H1 (cell line): ENCODE measurements at regions of chr3 and their contacts with region 1.

Region 1: GRCh38 chr3:15405448-15406050 is 21.8 kb downstream of the METTL6 start:
- DNase-seq: no peak
- H3K4me3 ChIP-seq: no peak overlapping the region
- H3K27ac ChIP-seq: no peak overlapping the region
- H3K4me1 ChIP-seq: no peaks in the 10 kb centered on the region
- H3K27me3 ChIP-seq: no peaks in the 10 kb centered on the region
- CTCF ChIP-seq: peak in 2 of 3 experiments; percentile 58 to 59; a peak in 3 of 4 replicates
- EP300 ChIP-seq: no peak
- POLR2A ChIP-seq: no peak
- RAD21 ChIP-seq: peak; percentile 69 to 71

Region 2: DNA sequence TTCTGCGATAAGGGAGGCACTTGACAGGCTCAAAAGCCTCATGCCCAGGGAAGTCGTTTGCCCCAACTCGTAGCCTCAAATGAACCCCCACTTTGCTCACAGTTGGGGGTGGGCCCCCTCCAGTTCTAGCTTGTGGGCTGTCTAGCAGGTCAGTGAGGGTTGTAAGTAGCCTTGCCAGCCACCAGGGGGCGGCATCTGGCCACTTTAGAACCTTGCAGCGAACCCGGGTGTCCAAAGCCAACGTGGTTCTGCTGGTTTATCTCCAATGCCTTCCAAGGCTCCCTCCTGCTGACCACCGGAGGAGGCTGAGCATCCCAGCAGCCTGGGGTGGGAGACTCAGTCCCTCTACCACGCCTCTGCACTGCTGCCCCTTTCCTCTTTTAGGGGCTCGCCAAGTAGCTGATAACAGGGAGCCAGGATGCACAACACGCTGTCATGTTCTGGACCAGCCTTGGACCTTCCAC is 297.4 kb before region 1 on chr3:
- CTCF ChIA-PET with region 1: interaction called, 25 read pairs
- POLR2A ChIA-PET with region 1: no interaction called
- DNase-seq: peak; percentile 68 to 91
- H3K4me3 ChIP-seq: no peak overlapping the region
- H3K27ac ChIP-seq: no peak overlapping the region
- H3K4me1 ChIP-seq: no peaks in the 10 kb centered on the region; a peak in 1 of 7 replicates
- H3K27me3 ChIP-seq: no peaks in the 10 kb centered on the region
- CTCF ChIP-seq: peak; percentile 88 to 93 (median 89)
- EP300 ChIP-seq: no peak
- POLR2A ChIP-seq: no peak
- RAD21 ChIP-seq: peak; percentile 92 to 95

Region 3: GRCh38 chr3:15199493-15200105 is 205.9 kb before region 1 on chr3:
- CTCF ChIA-PET with region 1: interaction called, 22 read pairs
- POLR2A ChIA-PET with region 1: no interaction called
- DNase-seq: no peak
- H3K4me3 ChIP-seq: no peak overlapping the region
- H3K27ac ChIP-seq: no peak overlapping the region
- H3K4me1 ChIP-seq: peaks cover 0 to 3% (median 0%) of the 10 kb centered on the region in 4 experiments; a peak in 2 of 7 replicates
- H3K27me3 ChIP-seq: no peaks in the 10 kb centered on the region; a peak in 2 of 7 replicates
- CTCF ChIP-seq: no peak
- EP300 ChIP-seq: no peak
- POLR2A ChIP-seq: no peak
- RAD21 ChIP-seq: no peak

Region 4: DNA sequence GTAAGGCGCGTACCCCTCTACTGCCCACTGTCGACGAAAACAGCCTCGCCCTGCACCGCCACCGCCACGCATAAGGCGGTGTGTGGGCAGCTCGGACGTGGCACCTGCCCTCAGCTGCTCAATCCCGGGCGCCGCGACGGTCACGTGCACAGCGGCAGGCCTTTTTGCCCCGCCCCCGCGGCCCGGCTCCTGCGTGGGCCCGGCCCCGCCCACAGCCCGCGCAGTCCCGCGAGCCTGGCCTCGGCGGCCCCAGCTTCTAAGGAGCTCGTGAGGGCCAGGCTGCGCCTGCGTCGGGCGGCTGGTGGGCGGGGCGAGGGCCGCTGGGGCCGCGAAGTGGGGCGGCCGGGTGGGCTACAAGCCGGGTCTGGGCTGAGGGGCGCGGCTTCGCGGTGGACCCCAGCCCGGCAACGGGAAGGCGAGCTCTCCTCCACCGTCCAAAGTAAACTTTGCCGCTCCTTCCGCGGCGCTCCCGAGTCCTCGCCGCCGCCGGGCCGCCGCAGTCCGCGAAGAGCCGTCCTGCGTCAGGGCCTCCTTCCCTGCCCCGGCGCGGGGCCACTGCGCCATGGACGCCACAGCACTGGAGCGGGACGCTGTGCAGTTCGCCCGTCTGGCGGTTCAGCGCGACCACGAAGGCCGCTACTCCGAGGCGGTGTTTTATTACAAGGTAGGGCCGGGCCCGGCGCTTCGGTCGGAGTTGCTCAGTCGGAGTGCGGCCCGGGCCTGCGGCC is 199.5 kb before region 1 on chr3 and contains the start of gene CAPN7:
- CTCF ChIA-PET with region 1: interaction called, 22 read pairs
- POLR2A ChIA-PET with region 1: no interaction called
- DNase-seq: peak; percentile 23 to 86
- H3K4me3 ChIP-seq: peak within 1 kb of the TSS; percentile 83 to 92 (median 86)
- H3K27ac ChIP-seq: peak within 1 kb of the TSS; percentile 73; the same call in 1 of the 2 replicates
- H3K4me1 ChIP-seq: peaks cover 0 to 3% (median 1%) of the 10 kb centered on the region in 4 experiments; a peak in 3 of 7 replicates
- H3K27me3 ChIP-seq: no peaks in the 10 kb centered on the region; a peak in 2 of 7 replicates
- CTCF ChIP-seq: peak; percentile 31 to 69 (median 57)
- EP300 ChIP-seq: no peak
- POLR2A ChIP-seq: peak in 1 of 2 experiments; percentile 67; a peak in 2 of 3 replicates
- RAD21 ChIP-seq: peak; percentile 14 to 30; a peak in 1 of 4 replicates
- total RNA-seq, gene CAPN7: 13.0 and 13.2 TPM in 2 replicates

Region 5: GRCh38 chr3:15276028-15276724 is 129.4 kb before region 1 on chr3:
- CTCF ChIA-PET with region 1: interaction called, 227 read pairs
- POLR2A ChIA-PET with region 1: no interaction called
- DNase-seq: no peak
- H3K4me3 ChIP-seq: no peak overlapping the region
- H3K27ac ChIP-seq: no peak overlapping the region
- H3K4me1 ChIP-seq: peaks cover 0 to 12% (median 4%) of the 10 kb centered on the region in 4 experiments; a peak in 4 of 7 replicates
- H3K27me3 ChIP-seq: no peaks in the 10 kb centered on the region
- CTCF ChIP-seq: no peak
- EP300 ChIP-seq: no peak
- POLR2A ChIP-seq: no peak
- RAD21 ChIP-seq: no peak

Region 6: GRCh38 chr3:15332405-15333098 is 73.0 kb before region 1 on chr3 and contains the start of gene SH3BP5:
- CTCF ChIA-PET with region 1: interaction called, 12 read pairs
- POLR2A ChIA-PET with region 1: interaction called, 4 read pairs
- DNase-seq: peak in 1 of 2 experiments; percentile 87
- H3K4me3 ChIP-seq: peak within 1 kb of the TSS; percentile 65 to 92 (median 84)
- H3K27ac ChIP-seq: no peak within 1 kb of the TSS; the same call in 1 of the 2 replicates
- H3K4me1 ChIP-seq: peaks cover 0 to 11% (median 9%) of the 10 kb centered on the region in 4 experiments; a peak in 6 of 7 replicates
- H3K27me3 ChIP-seq: peaks cover 1 to 20% (median 10%) of the 10 kb centered on the region in 4 experiments; a peak in 6 of 7 replicates
- CTCF ChIP-seq: peak; percentile 57 to 72 (median 63)
- EP300 ChIP-seq: no peak
- POLR2A ChIP-seq: no peak
- RAD21 ChIP-seq: peak; percentile 37 to 51
- total RNA-seq, gene SH3BP5: 9.4 and 9.7 TPM in 2 replicates

Region 7: GRCh38 chr3:15377961-15378791 is 27.4 kb before region 1 on chr3:
- CTCF ChIA-PET with region 1: interaction called, 16 read pairs
- POLR2A ChIA-PET with region 1: no interaction called
- DNase-seq: peak; percentile 66 to 91
- H3K4me3 ChIP-seq: peak overlapping the region in 1 of 4 experiments; percentile 32; a peak in 2 of 8 replicates
- H3K27ac ChIP-seq: peak overlapping the region; percentile 79
- H3K4me1 ChIP-seq: peaks cover 0 to 3% (median 0%) of the 10 kb centered on the region in 4 experiments; a peak in 3 of 7 replicates
- H3K27me3 ChIP-seq: no peaks in the 10 kb centered on the region
- CTCF ChIP-seq: peak; percentile 67 to 86 (median 81)
- EP300 ChIP-seq: peak in 1 of 2 experiments; percentile 59; a peak in 1 of 3 replicates
- POLR2A ChIP-seq: no peak
- RAD21 ChIP-seq: peak; percentile 81 to 85

Region 8: GRCh38 chr3:15549846-15550245 is 144.3 kb after region 1 on chr3:
- CTCF ChIA-PET with region 1: no interaction called
- POLR2A ChIA-PET with region 1: no interaction called
- DNase-seq: no peak
- H3K4me3 ChIP-seq: no peak overlapping the region
- H3K27ac ChIP-seq: no peak overlapping the region
- H3K4me1 ChIP-seq: no peaks in the 10 kb centered on the region
- H3K27me3 ChIP-seq: no peaks in the 10 kb centered on the region
- CTCF ChIP-seq: no peak
- EP300 ChIP-seq: no peak
- POLR2A ChIP-seq: no peak
- RAD21 ChIP-seq: no peak